ENCODE measurements at regions of chr22 and their contacts with region 1.

Region 1: DNA sequence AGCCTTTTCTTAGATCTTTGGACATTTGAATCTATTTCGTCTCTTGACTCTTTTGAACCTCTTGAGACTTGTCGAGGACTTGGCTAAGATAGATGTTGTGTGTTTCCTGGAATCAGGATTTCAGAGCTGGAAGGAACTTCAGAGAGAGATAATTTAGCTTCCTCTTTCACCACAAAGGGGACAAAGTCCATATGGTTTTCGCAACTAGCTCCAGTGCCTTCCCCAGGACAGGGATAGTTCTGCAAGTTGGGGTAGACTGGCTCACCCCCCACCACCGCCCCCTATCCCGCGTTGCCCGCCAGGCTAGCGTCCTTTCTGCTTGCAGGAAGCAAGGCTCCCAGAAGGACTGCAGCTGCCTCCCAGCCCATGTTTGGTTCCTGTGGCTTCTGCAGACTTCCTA is 75.7 kb upstream of the MYO18B start:
- DNase-seq: peak; percentile 57 to 73 (median 66)
- ATAC-seq: peak in 3 of 4 donors; percentile 54 to 78 (median 66)
- H3K4me3 ChIP-seq: peak overlapping the region in 4 of 12 donors; percentile 4 to 20 (median 8)
- H3K27ac ChIP-seq: peak overlapping the region in 7 of 12 donors; percentile 9 to 59 (median 34)
- H3K4me1 ChIP-seq: peaks cover 0 to 39% (median 10%) of the 10 kb centered on the region in 12 donors
- H3K27me3 ChIP-seq: no peaks in the 10 kb centered on the region
- CTCF ChIP-seq: no peak
- POLR2A ChIP-seq: no peak

Region 2: GRCh38 chr22:25179250-25179631 is 487.1 kb before region 1 on chr22:
- intact Hi-C with region 1: no loop called
- DNase-seq: no peak
- ATAC-seq: no peak
- H3K4me3 ChIP-seq: no peak overlapping the region
- H3K27ac ChIP-seq: no peak overlapping the region
- H3K4me1 ChIP-seq: no peaks in the 10 kb centered on the region
- H3K27me3 ChIP-seq: no peaks in the 10 kb centered on the region
- CTCF ChIP-seq: no peak
- POLR2A ChIP-seq: no peak

Region 3: DNA sequence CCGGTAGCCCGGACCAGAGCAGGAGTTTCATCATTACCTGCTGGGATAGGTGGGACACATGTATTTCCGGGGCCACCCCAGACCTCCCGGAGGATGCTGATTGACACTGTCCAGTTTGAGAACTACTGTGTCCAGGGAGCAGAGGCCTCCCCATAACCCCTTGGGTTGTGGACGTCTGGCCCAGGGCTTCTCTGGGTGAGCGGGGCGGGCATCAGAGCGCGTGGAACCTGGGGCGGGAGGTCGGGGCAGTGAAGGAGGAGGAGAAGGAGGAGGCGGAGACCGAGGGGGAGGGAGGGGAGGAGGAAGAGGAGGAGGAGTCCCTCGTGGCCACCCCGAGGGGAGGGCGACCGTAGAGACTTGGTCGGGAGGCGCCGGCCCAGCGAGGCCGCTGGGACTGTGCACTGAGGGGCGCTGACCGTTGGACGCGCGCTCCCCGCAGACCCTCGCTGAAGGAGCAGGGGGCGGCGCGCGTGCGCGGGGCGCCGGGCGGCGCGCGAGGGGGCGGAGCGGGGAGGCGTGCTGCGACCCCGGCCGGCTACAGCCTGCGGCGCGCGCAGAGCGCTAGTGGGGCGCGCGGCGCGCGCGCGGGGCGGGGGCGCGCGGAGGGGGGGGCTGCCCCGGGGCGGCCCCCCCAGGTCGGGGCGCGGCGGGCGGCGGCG is 101.9 kb before region 1 on chr22 and contains the start of gene GRK3:
- intact Hi-C with region 1: loop called in 1 of 10 experiments (anchors 10 kb)
- DNase-seq: peak; percentile 74 to 83 (median 78)
- ATAC-seq: peak; percentile 81 to 88 (median 86)
- H3K4me3 ChIP-seq: peak within 1 kb of the TSS; percentile 69 to 96 (median 86)
- H3K27ac ChIP-seq: peak within 1 kb of the TSS in 10 of 12 donors; percentile 38 to 87 (median 63)
- H3K4me1 ChIP-seq: peaks cover 0 to 53% (median 10%) of the 10 kb centered on the region in 12 donors
- H3K27me3 ChIP-seq: no peaks in the 10 kb centered on the region
- CTCF ChIP-seq: no peak
- POLR2A ChIP-seq: peak in 1 of 2 donors; percentile 31
- total RNA-seq, gene GRK3: 3.6 to 16.2 (median 6.3) TPM

Region 4: DNA sequence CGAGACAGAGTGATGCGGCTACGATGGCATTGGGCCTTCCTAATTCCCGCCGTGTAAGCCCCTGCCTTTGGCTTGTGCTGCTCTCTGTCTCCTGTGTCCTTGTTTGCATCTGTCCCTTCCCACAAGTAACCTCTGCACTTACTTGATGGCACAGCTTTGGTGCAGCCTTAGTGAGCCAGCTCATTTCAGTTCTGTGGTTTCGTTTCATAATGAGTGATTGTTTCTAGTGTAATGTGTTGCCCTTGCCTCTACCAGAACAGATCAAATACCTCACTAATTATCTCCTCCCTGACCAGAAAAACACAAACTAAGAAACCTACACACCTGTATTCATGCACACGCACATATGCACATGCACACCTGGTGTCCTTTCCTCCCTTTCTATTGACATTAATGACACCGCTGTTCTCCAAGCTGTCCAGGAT is 43.0 kb before region 1 on chr22:
- intact Hi-C with region 1: no loop called
- DNase-seq: no peak
- ATAC-seq: no peak
- H3K4me3 ChIP-seq: no peak overlapping the region
- H3K27ac ChIP-seq: no peak overlapping the region
- H3K4me1 ChIP-seq: peaks cover 0 to 15% (median under 1%) of the 10 kb centered on the region in 12 donors
- H3K27me3 ChIP-seq: no peaks in the 10 kb centered on the region
- CTCF ChIP-seq: no peak
- POLR2A ChIP-seq: no peak

Region 5: DNA sequence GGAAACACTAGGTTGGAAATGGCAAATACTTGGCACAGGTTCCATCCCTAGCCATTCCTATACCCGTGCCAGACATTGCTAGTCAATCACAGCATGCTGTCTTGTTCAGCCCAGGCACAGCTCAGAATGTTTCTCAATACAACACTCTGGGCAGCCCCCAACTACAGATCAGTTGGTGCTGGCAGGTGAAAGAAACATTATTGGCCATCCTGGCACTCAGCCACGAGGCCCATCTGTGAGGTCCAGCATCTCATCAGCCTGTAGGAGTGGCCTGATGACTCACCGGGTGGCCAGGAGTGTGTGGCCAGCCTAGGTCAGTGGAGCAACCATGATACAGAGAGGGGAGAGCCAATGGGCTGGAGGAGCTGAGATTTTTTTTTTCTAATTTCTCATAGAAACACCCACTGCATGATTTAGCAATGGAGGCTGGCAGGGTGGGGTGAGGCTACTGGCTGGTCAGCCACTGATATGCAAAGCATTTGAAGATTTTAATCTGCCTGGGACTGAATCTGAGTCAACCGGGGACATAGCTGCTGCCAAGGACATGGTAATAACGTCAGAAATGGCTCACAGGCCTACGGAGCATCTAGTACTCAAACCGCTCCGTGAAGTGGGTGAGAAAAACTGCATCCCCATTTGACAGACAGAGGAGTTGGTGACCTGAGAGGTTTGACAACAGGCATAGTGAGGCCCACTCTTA is 81.1 kb after region 1 on chr22:
- intact Hi-C with region 1: loop called in 1 of 10 experiments (anchors 10 kb)
- DNase-seq: peak in 3 of 5 donors; percentile 49 to 81 (median 66)
- ATAC-seq: peak; percentile 28 to 79 (median 50)
- H3K4me3 ChIP-seq: peak overlapping the region in 1 of 12 donors; percentile 15
- H3K27ac ChIP-seq: peak overlapping the region; percentile 17 to 98 (median 66)
- H3K4me1 ChIP-seq: peaks cover 0 to 66% (median 27%) of the 10 kb centered on the region in 12 donors
- H3K27me3 ChIP-seq: no peaks in the 10 kb centered on the region
- CTCF ChIP-seq: no peak
- POLR2A ChIP-seq: peak in 1 of 2 donors; percentile 13